Mammary epithelial cell (primary cell): ENCODE measurements at regions of chr1 and their contacts with region 1.

Region 1: GRCh38 chr1:235933017-235933765 is 66.5 kb upstream of the LYST start:
- DNase-seq: peak; percentile 82
- H3K4me3 ChIP-seq: peak overlapping the region in 1 of 3 experiments; percentile 4
- H3K27ac ChIP-seq: peak overlapping the region; percentile 78
- H3K4me1 ChIP-seq: peaks cover 33% of the 10 kb centered on the region
- H3K27me3 ChIP-seq: no peaks in the 10 kb centered on the region
- CTCF ChIP-seq: peak; percentile 16 to 49

Region 2: GRCh38 chr1:235908742-235909520 is 24.3 kb before region 1 on chr1:
- CTCF ChIA-PET with region 1: no interaction called
- dilution Hi-C with region 1: no loop called
- in situ Hi-C with region 1: no loop called
- intact Hi-C with region 1: loop called (anchors 2 kb)
- DNase-seq: peak; percentile 99
- H3K4me3 ChIP-seq: peak overlapping the region; percentile 3 to 25 (median 24)
- H3K27ac ChIP-seq: peak overlapping the region; percentile 99
- H3K4me1 ChIP-seq: peaks cover 49% of the 10 kb centered on the region
- H3K27me3 ChIP-seq: no peaks in the 10 kb centered on the region
- CTCF ChIP-seq: peak in 1 of 2 donors; percentile 3

Region 3: DNA sequence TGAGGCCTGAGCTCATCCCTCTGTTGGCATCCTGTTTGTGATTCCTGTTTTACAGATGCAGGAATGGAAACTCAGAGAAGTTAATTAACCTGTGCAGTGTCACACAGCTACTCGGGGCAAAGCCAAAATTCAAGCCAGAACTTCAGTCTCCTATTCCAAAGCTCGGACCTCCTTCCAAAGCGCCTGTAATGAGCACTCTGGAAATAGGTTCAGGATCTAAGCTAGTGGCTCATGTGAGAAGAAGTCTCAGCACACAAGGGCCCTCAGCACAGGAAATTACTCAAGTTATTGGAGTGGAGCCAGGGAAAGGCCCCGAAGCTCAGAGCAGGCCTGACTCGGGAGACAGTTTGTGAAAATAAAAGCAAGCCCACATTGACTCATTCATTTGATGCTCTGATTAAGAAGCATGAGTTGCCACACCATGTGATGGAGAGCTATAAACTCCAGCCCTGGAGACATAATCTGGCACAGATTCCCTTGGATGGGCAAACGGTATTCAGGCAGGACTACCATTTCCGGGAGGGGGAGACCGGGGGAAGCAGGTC is 15.9 kb before region 1 on chr1:
- CTCF ChIA-PET with region 1: interaction called, 3 read pairs
- dilution Hi-C with region 1: no loop called
- in situ Hi-C with region 1: no loop called
- intact Hi-C with region 1: loop called (anchors 1 kb)
- DNase-seq: peak; percentile 100
- H3K4me3 ChIP-seq: no peak overlapping the region
- H3K27ac ChIP-seq: peak overlapping the region; percentile 96
- H3K4me1 ChIP-seq: peaks cover 63% of the 10 kb centered on the region
- H3K27me3 ChIP-seq: no peaks in the 10 kb centered on the region
- CTCF ChIP-seq: no peak

Region 4: GRCh38 chr1:235990376-235991085 is 57.3 kb after region 1 on chr1:
- CTCF ChIA-PET with region 1: no interaction called
- dilution Hi-C with region 1: loop called (anchors 5 kb)
- in situ Hi-C with region 1: no loop called
- intact Hi-C with region 1: no loop called
- DNase-seq: no peak
- H3K4me3 ChIP-seq: no peak overlapping the region
- H3K27ac ChIP-seq: no peak overlapping the region
- H3K4me1 ChIP-seq: no peaks in the 10 kb centered on the region
- H3K27me3 ChIP-seq: no peaks in the 10 kb centered on the region
- CTCF ChIP-seq: no peak